Mammary epithelial cell (primary cell): ENCODE measurements at regions of chr6 and their contacts with region 1.

Region 1: GRCh38 chr6:32195652-32195901 is 3.1 kb upstream of the GPSM3 start:
- DNase-seq: peak; percentile 100
- H3K4me3 ChIP-seq: peak overlapping the region in 1 of 3 experiments; percentile 74
- H3K27ac ChIP-seq: peak overlapping the region; percentile 98
- H3K4me1 ChIP-seq: peaks cover 26% of the 10 kb centered on the region
- H3K27me3 ChIP-seq: no peaks in the 10 kb centered on the region
- CTCF ChIP-seq: peak; percentile 19 to 56

Region 2: DNA sequence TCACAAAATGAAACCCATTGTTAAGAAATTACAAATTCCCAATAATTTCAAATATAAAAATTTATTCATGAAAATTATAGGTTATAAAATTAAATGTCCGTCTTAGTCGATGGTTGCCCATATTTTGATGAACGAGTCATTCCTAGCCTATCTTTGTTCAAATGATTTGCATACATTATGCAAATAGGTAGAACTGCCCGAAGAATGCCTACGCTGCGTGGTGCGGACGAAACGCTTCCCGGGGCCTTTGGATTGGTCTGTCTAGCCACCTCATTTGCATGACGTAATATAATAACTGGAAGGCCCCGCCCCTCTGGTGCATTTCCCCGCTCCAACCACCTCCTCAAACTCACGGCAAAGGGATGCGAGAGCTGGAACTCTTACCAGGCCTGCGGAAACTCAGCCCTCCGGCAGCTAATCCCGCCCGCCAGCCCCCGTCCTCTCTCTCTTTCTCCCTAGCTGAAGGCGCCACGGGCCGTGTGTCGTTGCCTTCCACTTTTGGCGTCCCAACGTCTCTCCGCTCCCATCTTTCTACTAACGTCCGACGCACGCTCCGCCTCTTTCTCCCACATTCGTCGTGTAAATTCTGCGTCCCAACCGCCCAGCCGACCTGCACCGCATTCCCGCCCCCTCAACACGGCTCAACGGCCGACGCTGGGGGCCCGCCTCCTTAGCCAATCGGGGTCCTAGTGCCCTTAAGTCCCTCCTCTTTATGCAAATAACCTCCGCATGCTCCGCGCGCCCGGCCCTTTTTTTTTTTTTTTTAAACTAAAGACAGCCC is 575.6 kb before region 1 on chr6:
- CTCF ChIA-PET with region 1: no interaction called
- dilution Hi-C with region 1: no loop called
- in situ Hi-C with region 1: no loop called
- intact Hi-C with region 1: no loop called
- DNase-seq: peak; percentile 99
- H3K4me3 ChIP-seq: peak overlapping the region; percentile 55 to 88 (median 77)
- H3K27ac ChIP-seq: peak overlapping the region; percentile 96
- H3K4me1 ChIP-seq: peaks cover 16% of the 10 kb centered on the region
- H3K27me3 ChIP-seq: no peaks in the 10 kb centered on the region
- CTCF ChIP-seq: no peak

Region 3: GRCh38 chr6:32087574-32088486 is 107.7 kb before region 1 on chr6:
- CTCF ChIA-PET with region 1: interaction called, 4 read pairs
- dilution Hi-C with region 1: no loop called
- in situ Hi-C with region 1: no loop called
- intact Hi-C with region 1: loop called (anchors 1 kb)
- DNase-seq: peak; percentile 34
- H3K4me3 ChIP-seq: no peak overlapping the region
- H3K27ac ChIP-seq: no peak overlapping the region
- H3K4me1 ChIP-seq: peaks cover 13% of the 10 kb centered on the region
- H3K27me3 ChIP-seq: peaks cover 14% of the 10 kb centered on the region
- CTCF ChIP-seq: peak; percentile 21 to 61

Region 4: GRCh38 chr6:32127717-32128592 is 67.6 kb before region 1 on chr6 and contains the start of gene ATF6B:
- CTCF ChIA-PET with region 1: no interaction called
- dilution Hi-C with region 1: no loop called
- in situ Hi-C with region 1: no loop called
- intact Hi-C with region 1: loop called (anchors 2 kb)
- DNase-seq: peak; percentile 99
- H3K4me3 ChIP-seq: peak within 1 kb of the TSS; percentile 80 to 99 (median 82)
- H3K27ac ChIP-seq: peak within 1 kb of the TSS; percentile 70
- H3K4me1 ChIP-seq: peaks cover 18% of the 10 kb centered on the region
- H3K27me3 ChIP-seq: no peaks in the 10 kb centered on the region
- CTCF ChIP-seq: no peak
- total RNA-seq, gene ATF6B: 20.3 to 69.0 TPM

Region 5: GRCh38 chr6:32244946-32245398 is 49.4 kb after region 1 on chr6:
- CTCF ChIA-PET with region 1: no interaction called
- dilution Hi-C with region 1: no loop called
- in situ Hi-C with region 1: no loop called
- intact Hi-C with region 1: loop called (anchors 5 kb)
- DNase-seq: peak; percentile 33
- H3K4me3 ChIP-seq: no peak overlapping the region
- H3K27ac ChIP-seq: no peak overlapping the region
- H3K4me1 ChIP-seq: no peaks in the 10 kb centered on the region
- H3K27me3 ChIP-seq: no peaks in the 10 kb centered on the region
- CTCF ChIP-seq: peak; percentile 77 to 88

Region 6: GRCh38 chr6:32971581-32972352 is 776.2 kb after region 1 on chr6:
- CTCF ChIA-PET with region 1: no interaction called
- dilution Hi-C with region 1: no loop called
- in situ Hi-C with region 1: no loop called
- intact Hi-C with region 1: loop called (anchors 5 kb)
- DNase-seq: peak; percentile 100
- H3K4me3 ChIP-seq: peak overlapping the region; percentile 83 to 90 (median 89)
- H3K27ac ChIP-seq: peak overlapping the region; percentile 99
- H3K4me1 ChIP-seq: peaks cover 24% of the 10 kb centered on the region
- H3K27me3 ChIP-seq: no peaks in the 10 kb centered on the region
- CTCF ChIP-seq: no peak